ENCODE measurements at regions of chr3 and their contacts with region 1.

Region 1: DNA sequence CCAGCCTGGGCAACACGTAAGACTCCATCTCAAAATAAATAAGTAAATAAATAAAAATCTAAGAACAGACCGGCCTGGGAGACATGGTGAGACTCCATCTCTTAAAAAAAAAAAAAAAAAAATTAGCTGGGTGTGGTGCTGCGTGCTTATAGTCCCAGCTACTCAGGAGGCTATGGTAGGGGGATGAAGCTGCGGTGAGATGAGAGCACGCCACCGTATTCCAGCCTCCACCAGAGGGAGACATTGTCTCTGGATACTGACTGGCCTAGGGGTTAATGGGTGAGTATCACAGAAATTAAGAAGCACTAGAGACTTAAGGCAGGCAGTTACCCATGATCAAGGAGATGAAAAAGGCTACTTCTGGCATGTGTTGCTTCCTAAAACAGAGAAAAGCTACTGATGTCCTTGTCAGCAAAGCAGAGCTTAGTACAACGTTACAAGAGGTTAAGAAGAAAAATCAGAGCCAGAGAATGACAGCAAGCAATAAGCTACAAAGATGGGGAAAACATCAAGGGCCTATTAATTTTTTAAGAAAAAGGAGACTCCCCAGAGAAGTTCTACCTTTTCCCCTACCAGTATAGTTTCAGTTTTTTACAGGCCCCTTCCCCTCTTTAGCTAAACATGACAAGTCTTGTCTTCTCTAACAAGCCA is 8.6 kb downstream of the TFRC start:
- DNase-seq: no peak
- ATAC-seq: peak; percentile 87
- H3K4me3 ChIP-seq: no peak overlapping the region
- H3K27ac ChIP-seq: no peak overlapping the region
- H3K4me1 ChIP-seq: no peaks in the 10 kb centered on the region
- H3K27me3 ChIP-seq: no peaks in the 10 kb centered on the region

Region 2: DNA sequence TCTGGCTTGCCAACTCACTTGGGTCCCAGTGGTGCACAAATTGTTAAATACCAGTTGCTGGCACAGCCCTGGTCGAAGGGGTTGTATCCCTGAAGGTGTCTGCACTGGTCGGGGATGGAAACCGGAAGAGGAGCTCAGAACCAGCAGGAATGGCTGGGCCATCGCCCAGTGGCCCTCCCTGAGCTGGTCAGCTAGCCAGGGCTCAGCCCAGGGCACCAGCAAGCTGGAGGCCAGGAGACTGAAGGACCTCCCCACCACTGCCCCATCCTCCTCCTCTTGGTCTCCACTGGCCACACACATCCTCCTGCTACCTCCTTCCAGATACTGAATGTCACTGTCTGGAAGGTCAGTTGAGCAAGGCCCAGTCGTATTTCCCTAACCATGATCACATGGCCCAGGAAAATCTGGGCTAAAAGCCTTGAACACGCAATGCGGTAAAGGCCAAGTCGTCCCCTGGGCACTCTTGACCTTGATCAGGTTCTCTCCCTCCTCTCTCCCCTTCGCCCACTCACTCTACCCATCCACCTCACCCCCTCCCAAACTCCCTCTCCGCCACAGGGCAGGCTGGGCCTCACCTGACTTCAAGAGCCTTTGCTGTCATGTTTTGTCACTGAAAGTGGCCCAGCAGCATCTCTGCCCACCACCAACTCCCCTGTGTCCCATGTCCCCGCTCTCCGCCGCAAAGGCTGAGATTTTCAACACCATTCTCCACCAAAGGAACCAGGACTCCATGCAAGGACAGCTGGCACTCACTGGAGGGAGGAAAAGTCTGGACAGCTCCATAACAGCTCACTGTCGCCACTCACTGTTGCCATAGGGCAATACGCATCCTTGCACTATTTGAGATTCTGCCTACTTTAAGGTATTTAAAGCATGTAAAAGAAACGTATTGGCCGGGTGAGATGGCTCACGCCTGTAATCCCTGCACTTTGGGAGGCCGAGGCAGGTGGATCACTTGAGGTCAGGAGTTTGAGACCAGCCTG is 125.7 kb after region 1 on chr3:
- intact Hi-C with region 1: loop called (anchors 2 to 5 kb)
- DNase-seq: no peak
- ATAC-seq: no peak
- H3K4me3 ChIP-seq: no peak overlapping the region
- H3K27ac ChIP-seq: no peak overlapping the region
- H3K4me1 ChIP-seq: no peaks in the 10 kb centered on the region
- H3K27me3 ChIP-seq: no peaks in the 10 kb centered on the region

Measured in aorta (tissue), 5 donors.